ENCODE measurements at regions of chr6 and their contacts with region 1.

Region 1: DNA sequence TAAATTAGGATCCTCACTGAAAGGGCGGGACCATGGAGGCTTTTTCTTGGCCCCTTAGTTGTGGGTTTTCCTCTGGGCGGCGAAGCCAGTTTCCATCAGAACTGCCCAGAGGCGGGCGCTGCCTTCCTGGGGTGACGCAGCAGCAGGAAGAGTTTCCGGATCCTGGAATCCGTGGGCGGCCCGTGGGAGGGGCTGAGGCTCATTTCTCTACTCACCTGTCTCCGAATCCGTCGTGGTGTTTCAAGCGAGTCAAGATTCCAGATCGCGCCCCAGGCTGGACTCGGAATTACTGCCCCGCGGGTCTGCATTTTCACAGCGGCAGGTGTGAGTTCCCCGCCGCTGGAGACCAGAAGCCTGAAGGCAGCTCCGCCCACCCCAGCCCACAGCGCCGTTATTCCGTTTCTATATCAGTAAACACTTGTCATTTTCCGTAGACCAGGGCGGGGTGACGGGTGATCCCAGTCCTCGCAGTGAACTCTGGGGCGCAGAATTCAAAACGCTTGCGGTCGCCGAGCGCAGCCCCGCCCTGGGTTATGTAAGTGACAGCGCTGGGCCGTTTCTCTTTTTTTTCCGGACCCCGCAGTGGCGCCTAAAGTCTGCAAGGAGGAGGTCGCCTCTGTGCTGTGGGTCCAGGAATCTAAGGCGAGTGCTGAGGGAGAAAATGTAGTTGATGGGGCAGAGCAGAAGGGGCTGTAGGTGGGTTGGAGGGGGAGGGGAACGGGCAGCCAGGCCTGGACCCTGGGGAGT is 27.2 kb upstream of the POU5F1 start:
- DNase-seq: peak; percentile 80
- ATAC-seq: peak; percentile 78
- H3K4me3 Mint-ChIP-seq: peak overlapping the region; percentile 96
- H3K27ac Mint-ChIP-seq: peak overlapping the region; percentile 99
- H3K4me1 Mint-ChIP-seq: peaks cover 49% of the 10 kb centered on the region
- H3K27me3 Mint-ChIP-seq: no peaks in the 10 kb centered on the region
- CTCF ChIP-seq: no peak

Region 2: GRCh38 chr6:31058128-31058894 is 139.4 kb before region 1 on chr6:
- CTCF ChIA-PET with region 1: no interaction called
- POLR2A ChIA-PET with region 1: no interaction called
- intact Hi-C with region 1: no loop called
- DNase-seq: no peak
- ATAC-seq: no peak
- H3K4me3 Mint-ChIP-seq: no peak overlapping the region
- H3K27ac Mint-ChIP-seq: no peak overlapping the region
- H3K4me1 Mint-ChIP-seq: peaks cover 18% of the 10 kb centered on the region
- H3K27me3 Mint-ChIP-seq: peaks cover 2% of the 10 kb centered on the region
- CTCF ChIP-seq: no peak

Region 3: DNA sequence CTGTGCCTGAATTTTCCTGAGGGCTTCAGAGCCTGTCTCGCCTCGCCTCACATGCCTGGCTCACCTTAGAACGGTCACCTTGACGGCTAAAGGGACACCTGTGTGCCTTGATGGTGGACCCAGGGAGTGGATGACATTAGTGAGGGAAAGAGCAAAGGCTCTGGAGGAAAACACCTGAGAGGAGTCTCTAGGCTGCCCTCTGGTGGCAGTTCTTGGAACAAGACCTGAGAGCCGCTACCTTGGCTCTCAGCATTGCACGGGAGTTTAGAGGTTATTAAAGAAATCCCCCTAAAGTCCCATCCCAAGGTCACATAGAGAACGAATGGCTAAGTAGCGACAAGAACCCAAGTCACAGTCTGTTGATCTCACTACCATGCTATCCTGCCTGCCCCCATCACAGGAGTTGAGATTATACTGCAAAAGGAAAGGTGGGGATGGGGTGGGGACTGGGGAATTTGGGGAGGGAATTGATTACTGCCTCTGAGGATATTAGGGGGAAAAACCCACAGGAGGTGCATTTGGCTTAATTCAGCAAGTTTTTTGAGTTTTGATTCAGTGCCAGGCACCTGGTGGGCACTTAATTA is 69.5 kb before region 1 on chr6:
- CTCF ChIA-PET with region 1: interaction called, 8 read pairs
- POLR2A ChIA-PET with region 1: interaction called, 5 read pairs
- intact Hi-C with region 1: loop called (anchors 2 kb)
- DNase-seq: peak; percentile 56
- ATAC-seq: peak; percentile 69
- H3K4me3 Mint-ChIP-seq: no peak overlapping the region
- H3K27ac Mint-ChIP-seq: no peak overlapping the region
- H3K4me1 Mint-ChIP-seq: peaks cover 5% of the 10 kb centered on the region
- H3K27me3 Mint-ChIP-seq: peaks cover 12% of the 10 kb centered on the region
- CTCF ChIP-seq: peak; percentile 54

Region 4: DNA sequence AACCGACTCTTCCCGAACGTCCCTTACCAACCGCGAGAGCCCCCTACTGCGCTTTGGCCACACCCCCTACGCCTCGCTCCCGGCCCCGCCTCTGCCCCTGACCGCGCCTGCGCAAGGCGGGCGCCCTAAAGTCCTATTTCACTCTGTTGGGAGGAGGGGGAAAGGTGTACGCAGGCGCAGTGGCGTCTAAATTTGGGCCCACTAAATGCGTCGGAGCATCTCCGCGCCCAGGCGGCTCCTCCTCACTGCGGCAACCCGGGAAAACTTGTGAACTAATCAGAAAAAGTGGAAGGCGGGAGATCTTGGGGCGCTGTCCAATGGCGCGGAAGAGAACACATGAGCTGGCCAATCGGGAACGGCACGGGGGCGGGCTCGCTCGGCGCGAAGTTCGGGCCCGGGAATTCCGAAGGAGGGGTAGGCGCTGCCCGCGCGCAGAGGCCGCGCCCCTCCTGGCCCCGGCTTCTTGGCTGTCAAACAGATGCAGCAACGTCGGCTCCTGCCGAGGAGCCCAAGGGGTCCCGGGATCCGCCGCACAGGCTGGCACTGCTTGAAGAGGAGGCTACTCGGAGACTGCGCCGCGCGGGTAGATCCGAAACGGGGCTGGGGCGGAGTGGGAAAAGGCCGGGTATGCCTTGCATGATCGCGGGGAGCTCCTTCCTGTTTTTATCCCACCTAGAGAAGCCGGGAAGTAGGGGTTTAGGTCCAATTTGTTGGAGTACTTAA is 39.4 kb before region 1 on chr6 and contains the start of gene TCF19:
- CTCF ChIA-PET with region 1: no interaction called
- POLR2A ChIA-PET with region 1: interaction called, 13 read pairs
- intact Hi-C with region 1: loop called (anchors 2 kb)
- DNase-seq: peak; percentile 98
- ATAC-seq: peak; percentile 91
- H3K4me3 Mint-ChIP-seq: peak within 1 kb of the TSS; percentile 95
- H3K27ac Mint-ChIP-seq: peak within 1 kb of the TSS; percentile 90
- H3K4me1 Mint-ChIP-seq: peaks cover 34% of the 10 kb centered on the region
- H3K27me3 Mint-ChIP-seq: no peaks in the 10 kb centered on the region
- CTCF ChIP-seq: no peak
- total RNA-seq, gene TCF19: 17.3 TPM in 2 replicates

Region 5: GRCh38 chr6:31356946-31357466 is 159.3 kb after region 1 on chr6 and contains the start of gene HLA-B:
- CTCF ChIA-PET with region 1: interaction called, 3 read pairs
- POLR2A ChIA-PET with region 1: interaction called, 44 read pairs
- intact Hi-C with region 1: loop called (anchors 1 kb)
- DNase-seq: peak; percentile 64
- ATAC-seq: peak; percentile 85
- H3K4me3 Mint-ChIP-seq: peak within 1 kb of the TSS; percentile 95
- H3K27ac Mint-ChIP-seq: peak within 1 kb of the TSS; percentile 100
- H3K4me1 Mint-ChIP-seq: peaks cover 54% of the 10 kb centered on the region
- H3K27me3 Mint-ChIP-seq: no peaks in the 10 kb centered on the region
- CTCF ChIP-seq: no peak
- total RNA-seq, gene HLA-B: 3,667 and 3,668 TPM in 2 replicates

Region 6: DNA sequence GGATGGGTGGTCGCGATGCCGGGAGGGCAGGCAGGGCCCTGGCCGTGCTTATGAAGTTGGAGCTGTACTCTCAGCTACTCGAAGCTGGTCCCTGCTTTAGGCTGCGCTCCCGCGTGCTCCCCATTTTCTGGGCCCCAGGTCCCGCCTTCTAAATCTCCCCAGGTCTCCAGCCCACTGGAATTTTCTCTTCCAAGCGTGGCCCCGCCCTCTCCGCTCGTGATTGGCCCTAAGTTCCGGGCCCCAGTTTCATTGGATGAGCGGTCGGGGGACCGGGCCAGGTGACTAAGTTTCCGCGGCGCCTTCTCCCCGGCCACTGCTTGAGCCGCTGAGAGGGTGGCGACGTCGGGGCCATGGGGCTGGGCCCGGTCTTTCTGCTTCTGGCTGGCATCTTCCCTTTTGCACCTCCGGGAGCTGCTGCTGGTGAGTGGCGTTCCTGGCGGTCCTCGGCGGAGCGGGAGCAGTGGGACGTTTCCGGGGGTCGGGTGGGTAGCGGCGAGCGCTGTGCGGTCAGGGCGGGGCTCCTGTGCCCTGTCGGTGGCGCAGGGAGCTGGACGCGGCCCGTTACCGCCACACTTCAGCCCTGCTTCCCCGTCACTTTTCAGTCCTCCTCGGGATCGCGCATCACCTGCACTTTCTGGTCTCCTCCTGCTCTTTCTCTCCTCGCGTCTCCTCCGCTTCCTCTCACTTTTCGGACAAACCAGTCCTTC is 205.7 kb after region 1 on chr6 and contains the start of gene MICA:
- CTCF ChIA-PET with region 1: no interaction called
- POLR2A ChIA-PET with region 1: interaction called, 7 read pairs
- intact Hi-C with region 1: loop called (anchors 1 kb)
- DNase-seq: peak; percentile 63
- ATAC-seq: peak; percentile 65
- H3K4me3 Mint-ChIP-seq: peak within 1 kb of the TSS; percentile 91
- H3K27ac Mint-ChIP-seq: peak within 1 kb of the TSS; percentile 80
- H3K4me1 Mint-ChIP-seq: peaks cover 63% of the 10 kb centered on the region
- H3K27me3 Mint-ChIP-seq: no peaks in the 10 kb centered on the region
- CTCF ChIP-seq: no peak
- total RNA-seq, gene MICA: 8.9 and 9.0 TPM in 2 replicates

Measured in activated B cell treated with CpG ODN at 0.5 μM for 24 hours (primary cell).